CD8-positive, alpha-beta T cell (primary cell): ENCODE measurements at regions of chr3 and their contacts with region 1.

Region 1: GRCh38 chr3:49007068-49007770 is at the start of gene WDR6:
- DNase-seq: peak; percentile 94 to 99 (median 96)
- ATAC-seq: peak; percentile 87
- H3K4me3 ChIP-seq: peak within 1 kb of the TSS; percentile 87 to 92
- H3K4me3 Mint-ChIP-seq: peak within 1 kb of the TSS; percentile 100
- H3K27ac ChIP-seq: peak within 1 kb of the TSS; percentile 81 to 92
- H3K27ac Mint-ChIP-seq: peak within 1 kb of the TSS; percentile 99
- H3K4me1 ChIP-seq: peaks cover 15% of the 10 kb centered on the region
- H3K4me1 Mint-ChIP-seq: peaks cover 30% of the 10 kb centered on the region
- H3K27me3 ChIP-seq: no peaks in the 10 kb centered on the region
- H3K27me3 Mint-ChIP-seq: no peaks in the 10 kb centered on the region
- CTCF ChIP-seq: peak; percentile 34
- total RNA-seq, gene WDR6: 112 to 130 TPM

Region 2: GRCh38 chr3:48595526-48596121 is 411.6 kb before region 1 on chr3:
- CTCF ChIA-PET with region 1: no interaction called
- POLR2A ChIA-PET with region 1: no interaction called
- intact Hi-C with region 1: no loop called
- DNase-seq: peak in 1 of 9 experiments; percentile 9
- ATAC-seq: peak; percentile 11
- H3K4me3 ChIP-seq: no peak overlapping the region
- H3K4me3 Mint-ChIP-seq: no peak overlapping the region
- H3K27ac ChIP-seq: no peak overlapping the region
- H3K27ac Mint-ChIP-seq: no peak overlapping the region
- H3K4me1 ChIP-seq: no peaks in the 10 kb centered on the region
- H3K4me1 Mint-ChIP-seq: peaks cover 10% of the 10 kb centered on the region
- H3K27me3 ChIP-seq: peaks cover 0 to 2% of the 10 kb centered on the region in 2 experiments
- H3K27me3 Mint-ChIP-seq: peaks cover 25% of the 10 kb centered on the region
- CTCF ChIP-seq: no peak

Region 3: DNA sequence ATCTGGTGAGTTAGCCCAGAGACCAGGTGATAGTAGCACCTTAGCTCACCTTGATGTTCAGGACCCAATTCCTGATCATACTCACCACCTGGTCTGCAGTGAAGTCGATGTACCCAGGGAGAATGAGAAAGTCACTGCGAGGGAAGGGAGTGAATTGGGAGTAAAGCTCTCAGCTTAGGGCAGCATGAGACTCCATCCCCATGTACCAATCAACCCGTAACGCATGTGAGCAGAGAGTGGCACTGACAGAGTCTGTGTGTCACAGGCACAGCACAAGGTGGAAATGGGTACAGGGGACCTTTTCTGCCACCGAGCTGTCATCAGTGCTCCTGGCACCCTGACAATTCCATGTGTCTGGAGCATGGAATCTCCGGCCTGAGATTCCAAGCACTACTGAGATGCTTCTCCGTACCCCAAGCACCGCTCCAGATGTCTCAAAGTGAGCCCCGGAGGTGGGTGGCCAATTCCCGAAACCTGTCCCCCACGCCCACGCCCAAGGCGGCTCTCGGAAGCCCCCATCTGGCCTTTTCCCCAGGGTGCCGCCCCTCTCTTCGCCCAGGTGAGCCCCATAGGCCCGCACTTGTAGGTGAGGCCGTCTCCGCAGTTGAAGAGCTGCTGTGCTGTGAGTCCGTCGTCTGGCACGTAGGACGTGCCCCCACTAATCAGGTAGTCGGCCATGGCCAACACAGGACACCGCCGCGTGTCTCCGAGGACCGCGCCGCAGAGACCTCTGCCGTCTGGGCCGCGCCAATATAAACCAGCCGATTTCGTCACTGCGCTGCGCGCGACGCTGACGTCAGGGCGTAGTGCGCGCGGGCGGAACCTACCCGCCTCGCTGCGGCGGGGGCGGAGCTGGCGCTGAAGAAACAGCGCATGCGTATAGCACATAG is 21.7 kb after region 1 on chr3 and contains the start of gene IMPDH2:
- CTCF ChIA-PET with region 1: interaction called, 76 read pairs
- POLR2A ChIA-PET with region 1: interaction called, 122 read pairs
- intact Hi-C with region 1: loop called in 1 of 2 experiments (anchors 1 kb)
- DNase-seq: peak; percentile 86 to 98 (median 93)
- ATAC-seq: peak; percentile 95
- H3K4me3 ChIP-seq: peak within 1 kb of the TSS; percentile 52 to 81
- H3K4me3 Mint-ChIP-seq: peak within 1 kb of the TSS; percentile 92
- H3K27ac ChIP-seq: peak within 1 kb of the TSS; percentile 77 to 98
- H3K27ac Mint-ChIP-seq: peak within 1 kb of the TSS; percentile 97
- H3K4me1 ChIP-seq: peaks cover 13% of the 10 kb centered on the region
- H3K4me1 Mint-ChIP-seq: peaks cover 25% of the 10 kb centered on the region
- H3K27me3 ChIP-seq: no peaks in the 10 kb centered on the region
- H3K27me3 Mint-ChIP-seq: no peaks in the 10 kb centered on the region
- CTCF ChIP-seq: no peak
- total RNA-seq, gene IMPDH2: 115 to 117 TPM